ENCODE measurements at regions of chr11 and their contacts with region 1.

Region 1: GRCh38 chr11:6362873-6363678 is 27.2 kb upstream of the SMPD1 start:
- DNase-seq: peak; percentile 33
- H3K4me3 ChIP-seq: no peak overlapping the region
- CTCF ChIP-seq: peak; percentile 97

Region 2: GRCh38 chr11:6096427-6096826 is 266.6 kb before region 1 on chr11:
- CTCF ChIA-PET with region 1: no interaction called
- POLR2A ChIA-PET with region 1: no interaction called
- DNase-seq: no peak
- H3K4me3 ChIP-seq: no peak overlapping the region
- CTCF ChIP-seq: no peak

Region 3: DNA sequence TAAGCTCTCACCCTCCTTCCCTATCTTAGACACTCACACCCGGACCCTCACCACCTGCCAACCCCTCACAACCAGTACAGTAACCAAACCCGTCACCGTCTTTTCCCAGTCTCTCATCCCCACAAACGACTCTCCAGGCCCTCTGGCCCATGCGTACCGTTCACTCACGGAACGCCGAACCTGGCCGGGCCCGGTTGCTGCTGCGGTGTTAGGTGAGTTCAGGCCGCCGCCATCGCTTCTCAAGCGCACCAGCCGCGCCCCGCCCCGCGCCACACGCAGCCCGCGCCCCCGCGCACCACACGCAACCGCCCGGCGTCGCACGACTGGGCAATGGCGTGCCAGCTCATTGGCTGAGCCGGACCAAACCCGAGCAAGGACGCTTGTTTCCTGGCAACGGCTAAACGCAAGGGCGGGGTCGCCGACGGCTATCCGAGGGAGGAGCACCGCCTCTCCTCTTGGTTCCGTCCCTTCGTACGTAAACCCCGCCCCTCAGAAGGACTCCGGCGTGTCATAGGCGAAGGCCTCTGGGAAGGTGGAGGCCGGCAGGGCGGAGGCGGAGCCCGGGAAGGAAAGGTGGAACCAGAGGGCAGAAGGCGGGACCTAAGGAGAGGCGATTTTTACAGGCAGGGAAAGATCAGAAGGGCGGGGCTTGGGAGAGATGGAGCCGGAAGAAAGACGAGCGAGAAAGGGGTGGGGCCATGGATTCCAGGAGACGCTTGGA is 128.5 kb before region 1 on chr11 and contains the start of gene FHIP1B:
- CTCF ChIA-PET with region 1: interaction called, 10 read pairs
- POLR2A ChIA-PET with region 1: interaction called, 4 read pairs
- DNase-seq: peak; percentile 98
- H3K4me3 ChIP-seq: peak within 1 kb of the TSS; percentile 98
- CTCF ChIP-seq: no peak

Region 4: DNA sequence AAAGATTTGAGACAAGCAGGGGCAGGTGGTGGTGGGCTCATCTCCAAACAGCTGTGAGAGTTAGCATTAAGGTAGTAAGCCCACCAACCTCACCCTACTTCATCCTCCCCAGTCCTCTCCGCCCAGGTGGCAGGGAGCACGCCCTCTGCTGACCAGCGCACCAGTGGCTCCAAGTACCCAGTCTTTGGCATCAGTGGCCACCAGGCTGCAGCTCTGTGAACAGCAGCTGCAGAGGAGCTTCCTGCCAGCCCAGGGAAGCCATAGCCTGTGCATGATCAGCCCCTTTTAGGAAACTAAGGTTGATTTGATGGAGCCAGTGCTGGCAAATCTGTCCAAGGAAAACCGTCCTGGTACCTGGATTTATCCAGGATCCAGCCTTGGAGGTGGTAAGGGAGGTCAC is 64.5 kb before region 1 on chr11:
- CTCF ChIA-PET with region 1: interaction called, 66 read pairs
- POLR2A ChIA-PET with region 1: no interaction called
- DNase-seq: no peak
- H3K4me3 ChIP-seq: no peak overlapping the region
- CTCF ChIP-seq: peak; percentile 81

Region 5: DNA sequence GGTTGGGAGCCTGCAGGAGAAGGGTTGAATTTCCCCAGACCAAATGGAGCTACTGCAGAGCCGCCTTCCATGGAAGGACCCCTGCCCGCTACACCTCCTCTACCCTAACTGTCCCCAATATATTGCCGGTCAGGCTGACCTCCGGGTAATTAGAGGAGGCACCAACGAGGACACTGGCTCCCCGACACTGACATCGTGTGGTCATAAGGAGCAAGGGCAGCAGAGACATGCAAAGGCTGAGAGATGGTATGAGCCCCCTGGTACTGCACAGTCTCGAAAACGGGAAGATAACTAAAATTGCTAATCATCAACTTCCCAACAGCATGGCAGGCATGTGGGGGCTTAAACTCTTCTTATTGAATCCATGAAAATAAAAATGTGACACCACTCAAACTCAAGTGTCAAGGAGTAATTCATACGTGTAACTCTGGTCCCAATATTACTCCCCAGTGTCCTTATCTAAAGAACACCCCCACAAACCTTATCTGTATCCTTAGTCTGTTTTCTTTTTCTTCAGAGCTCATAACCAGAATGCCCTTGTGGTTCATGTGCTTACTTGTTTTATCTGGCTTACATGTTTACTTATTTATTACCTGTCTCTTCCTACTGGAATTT is 47.2 kb before region 1 on chr11:
- CTCF ChIA-PET with region 1: interaction called, 92 read pairs
- POLR2A ChIA-PET with region 1: interaction called, 4 read pairs
- DNase-seq: no peak
- H3K4me3 ChIP-seq: no peak overlapping the region
- CTCF ChIP-seq: peak; percentile 89

Region 6: DNA sequence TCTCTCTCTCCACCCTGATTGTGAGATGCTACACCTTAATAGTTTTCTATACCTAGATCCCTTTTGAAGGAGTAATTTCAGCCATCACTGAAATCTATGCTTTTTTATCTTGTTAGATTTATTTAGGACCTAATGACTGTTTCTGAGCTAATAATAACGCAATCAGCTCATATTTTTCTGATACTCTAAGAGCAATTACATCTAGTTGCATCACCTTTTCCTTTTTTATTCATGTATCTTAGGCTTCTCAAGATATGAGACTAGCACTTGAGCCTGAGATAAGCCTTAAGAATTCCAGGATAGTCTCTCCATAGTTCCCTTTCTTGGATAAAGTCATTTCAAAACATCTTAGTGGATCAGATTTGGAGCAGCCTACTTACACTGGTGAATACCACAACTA is 17.7 kb before region 1 on chr11:
- CTCF ChIA-PET with region 1: interaction called, 131 read pairs
- POLR2A ChIA-PET with region 1: no interaction called
- DNase-seq: no peak
- H3K4me3 ChIP-seq: no peak overlapping the region
- CTCF ChIP-seq: no peak

Region 7: DNA sequence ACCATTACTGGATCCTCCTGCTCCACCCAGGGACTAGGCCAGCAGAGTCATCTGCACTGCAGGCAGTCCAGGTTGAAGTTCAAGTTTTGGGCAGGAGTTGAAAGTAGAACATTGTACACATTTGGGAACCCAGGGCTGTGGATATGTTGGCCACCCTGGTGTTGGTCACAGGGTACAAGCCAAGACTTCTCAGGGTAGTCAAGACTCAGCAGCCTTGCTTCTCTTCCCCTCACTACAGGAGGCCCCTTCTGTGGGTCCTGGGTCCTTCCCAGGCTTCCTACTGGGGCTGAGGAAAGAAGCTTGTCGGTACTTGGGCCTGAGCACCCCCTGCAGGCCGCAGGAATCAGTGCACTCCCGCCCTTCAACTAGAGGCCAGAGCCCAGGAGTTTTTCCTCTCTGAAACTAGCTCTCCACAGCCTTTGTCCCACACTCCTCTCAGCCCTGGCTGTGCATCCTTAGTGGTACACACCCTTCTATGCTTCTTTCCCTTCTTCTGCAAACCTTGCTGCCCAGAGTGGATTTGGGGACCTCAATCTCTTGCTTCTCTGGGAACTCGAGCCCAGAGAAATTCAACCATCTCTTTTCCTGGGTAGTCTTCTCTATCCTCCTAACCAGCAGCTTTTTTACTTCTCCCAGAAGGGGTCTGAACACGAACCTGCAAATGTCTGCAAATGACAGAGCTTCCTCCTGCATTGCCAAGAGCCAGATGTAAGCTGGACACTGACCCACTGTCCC is 80.4 kb after region 1 on chr11:
- CTCF ChIA-PET with region 1: interaction called, 10 read pairs
- POLR2A ChIA-PET with region 1: no interaction called
- DNase-seq: no peak
- H3K4me3 ChIP-seq: no peak overlapping the region
- CTCF ChIP-seq: peak; percentile 91

Region 8: DNA sequence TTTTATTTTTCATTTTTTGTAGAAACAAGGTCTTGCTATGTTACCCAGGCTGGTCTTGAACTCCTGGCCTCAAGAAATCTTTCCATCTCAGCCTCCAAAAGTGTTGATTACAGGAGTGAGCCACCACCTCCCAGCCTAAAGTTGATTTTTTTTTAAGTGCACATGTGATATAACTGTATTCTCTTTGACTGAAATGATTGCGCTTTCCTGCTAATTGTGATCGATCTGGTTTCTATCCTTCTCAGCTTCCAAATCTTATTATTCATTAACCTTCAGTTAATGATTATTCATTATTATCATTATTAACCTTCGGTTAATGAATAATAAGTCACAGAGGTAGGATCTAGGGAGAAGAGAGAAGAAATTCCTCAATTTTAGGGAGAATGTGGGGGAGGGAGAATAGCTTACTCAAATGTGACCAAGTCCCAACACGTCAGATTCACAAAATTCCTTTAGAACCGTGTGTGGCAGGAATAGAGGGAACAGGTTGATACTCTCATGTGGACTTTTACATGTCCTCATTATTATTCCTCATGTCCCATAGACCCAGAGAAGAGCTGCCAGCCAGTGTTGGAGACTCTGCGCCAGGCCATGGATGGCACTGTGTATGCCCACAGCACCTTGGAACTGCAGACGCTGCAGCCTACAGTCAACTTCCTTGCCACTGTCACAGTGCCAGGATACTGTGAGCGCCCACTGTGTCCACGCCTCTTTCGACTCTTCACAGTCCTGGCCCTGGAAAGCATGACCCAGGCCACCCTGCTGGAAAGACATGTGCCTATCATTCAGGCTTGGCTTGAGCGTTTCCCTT is 193.3 kb after region 1 on chr11:
- CTCF ChIA-PET with region 1: no interaction called
- POLR2A ChIA-PET with region 1: no interaction called
- DNase-seq: no peak
- H3K4me3 ChIP-seq: no peak overlapping the region
- CTCF ChIP-seq: no peak

Region 9: GRCh38 chr11:6850526-6850925 is 487.4 kb after region 1 on chr11:
- CTCF ChIA-PET with region 1: no interaction called
- POLR2A ChIA-PET with region 1: no interaction called
- DNase-seq: no peak
- H3K4me3 ChIP-seq: no peak overlapping the region
- CTCF ChIP-seq: no peak

Measured in AG04449 (cell line).